Natural killer cell (primary cell): ENCODE measurements at regions of chr19 and their contacts with region 1.

Region 1: GRCh38 chr19:16435238-16435917 is 36.4 kb downstream of the EPS15L1 start:
- DNase-seq: peak; percentile 26 to 71
- ATAC-seq: peak; percentile 84 to 93 (median 91)
- H3K4me3 ChIP-seq: no peak overlapping the region
- H3K4me3 Mint-ChIP-seq: peak overlapping the region; percentile 82
- H3K27ac ChIP-seq: peak overlapping the region; percentile 72
- H3K27ac Mint-ChIP-seq: peak overlapping the region; percentile 97 to 99
- H3K4me1 ChIP-seq: peaks cover 57% of the 10 kb centered on the region
- H3K4me1 Mint-ChIP-seq: peaks cover 39 to 42% of the 10 kb centered on the region in 2 donors
- H3K27me3 ChIP-seq: no peaks in the 10 kb centered on the region
- H3K27me3 Mint-ChIP-seq: no peaks in the 10 kb centered on the region
- CTCF ChIP-seq: no peak

Region 2: DNA sequence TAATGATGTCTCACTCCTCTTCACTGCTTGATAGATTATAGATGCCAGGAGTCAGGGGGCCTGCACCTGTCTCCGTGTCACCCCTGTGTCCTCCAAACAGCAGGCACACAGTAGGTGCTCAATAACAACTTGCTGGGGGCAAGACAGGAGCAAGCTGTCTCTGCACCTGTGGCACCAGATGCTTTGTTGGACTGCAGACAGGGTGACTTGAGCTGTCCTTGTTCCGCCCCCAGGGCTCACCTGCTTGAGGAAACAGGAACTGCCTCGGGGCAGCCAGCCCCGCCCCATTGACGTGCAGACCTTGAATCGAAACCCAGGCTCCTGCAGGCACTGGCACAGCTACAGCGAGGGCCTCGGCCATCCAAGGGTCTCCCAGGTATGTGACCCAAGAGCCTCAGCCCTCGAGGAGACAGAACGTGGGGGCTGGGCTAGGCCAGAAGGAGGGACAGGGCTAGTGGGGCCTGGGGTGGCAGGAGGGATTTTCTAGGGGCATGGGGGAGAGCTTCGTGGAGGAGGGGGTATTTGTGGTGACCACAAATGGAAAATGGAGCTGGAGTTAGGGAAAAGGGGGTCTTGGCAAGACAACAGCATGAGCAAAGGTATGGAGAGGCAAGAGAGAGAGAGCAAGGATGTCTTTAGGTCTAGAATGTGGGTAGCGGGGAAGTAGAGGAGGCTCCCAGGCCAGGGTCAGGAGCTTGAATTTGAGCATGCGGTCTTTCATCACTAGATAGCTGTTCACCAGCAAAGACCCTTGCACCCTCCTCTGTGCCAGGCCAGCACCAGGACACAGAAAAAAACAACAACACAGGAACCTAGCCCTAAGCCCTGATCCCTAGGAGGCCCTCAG is 291.8 kb before region 1 on chr19 and contains the start of gene HSH2D:
- intact Hi-C with region 1: loop called (anchors 5 kb)
- DNase-seq: peak; percentile 73 to 89
- ATAC-seq: peak; percentile 68 to 84 (median 69)
- H3K4me3 ChIP-seq: peak within 1 kb of the TSS; percentile 71
- H3K4me3 Mint-ChIP-seq: peak within 1 kb of the TSS; percentile 99
- H3K27ac ChIP-seq: peak within 1 kb of the TSS; percentile 82
- H3K27ac Mint-ChIP-seq: peak within 1 kb of the TSS; percentile 99
- H3K4me1 ChIP-seq: peaks cover 99% of the 10 kb centered on the region
- H3K4me1 Mint-ChIP-seq: peaks cover 62 to 64% of the 10 kb centered on the region in 2 donors
- H3K27me3 ChIP-seq: no peaks in the 10 kb centered on the region
- H3K27me3 Mint-ChIP-seq: no peaks in the 10 kb centered on the region
- CTCF ChIP-seq: no peak
- total RNA-seq, gene HSH2D: 203 to 319 (median 278) TPM

Region 3: DNA sequence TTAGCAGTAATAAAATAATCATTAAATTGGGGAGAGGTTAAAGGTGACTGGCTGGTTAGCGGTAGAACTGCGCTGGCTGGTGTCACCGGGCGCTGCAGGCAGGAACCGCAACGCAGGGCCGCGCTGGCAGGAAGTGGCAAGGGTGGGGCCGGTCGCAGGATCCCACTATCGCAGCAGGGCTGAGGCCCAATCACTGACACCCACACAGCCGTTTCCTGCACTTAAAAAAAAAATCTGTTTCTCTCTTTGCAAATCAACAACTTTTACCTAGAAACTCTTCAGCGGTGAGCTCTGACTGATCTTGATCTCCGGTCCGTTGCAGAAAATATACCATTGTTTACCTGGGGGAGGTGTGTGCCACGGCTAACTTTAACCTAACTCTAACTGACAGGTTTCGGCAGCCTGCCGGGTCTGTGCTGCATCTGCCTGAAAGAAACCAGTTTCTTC is 63.8 kb before region 1 on chr19:
- intact Hi-C with region 1: loop called (anchors 1 kb)
- DNase-seq: peak; percentile 90 to 96
- ATAC-seq: peak; percentile 48 to 78 (median 73)
- H3K4me3 ChIP-seq: peak overlapping the region; percentile 13
- H3K4me3 Mint-ChIP-seq: no peak overlapping the region
- H3K27ac ChIP-seq: peak overlapping the region; percentile 94
- H3K27ac Mint-ChIP-seq: no peak overlapping the region
- H3K4me1 ChIP-seq: peaks cover 99% of the 10 kb centered on the region
- H3K4me1 Mint-ChIP-seq: peaks cover 33 to 34% of the 10 kb centered on the region in 2 donors
- H3K27me3 ChIP-seq: no peaks in the 10 kb centered on the region
- H3K27me3 Mint-ChIP-seq: no peaks in the 10 kb centered on the region
- CTCF ChIP-seq: no peak

Region 4: DNA sequence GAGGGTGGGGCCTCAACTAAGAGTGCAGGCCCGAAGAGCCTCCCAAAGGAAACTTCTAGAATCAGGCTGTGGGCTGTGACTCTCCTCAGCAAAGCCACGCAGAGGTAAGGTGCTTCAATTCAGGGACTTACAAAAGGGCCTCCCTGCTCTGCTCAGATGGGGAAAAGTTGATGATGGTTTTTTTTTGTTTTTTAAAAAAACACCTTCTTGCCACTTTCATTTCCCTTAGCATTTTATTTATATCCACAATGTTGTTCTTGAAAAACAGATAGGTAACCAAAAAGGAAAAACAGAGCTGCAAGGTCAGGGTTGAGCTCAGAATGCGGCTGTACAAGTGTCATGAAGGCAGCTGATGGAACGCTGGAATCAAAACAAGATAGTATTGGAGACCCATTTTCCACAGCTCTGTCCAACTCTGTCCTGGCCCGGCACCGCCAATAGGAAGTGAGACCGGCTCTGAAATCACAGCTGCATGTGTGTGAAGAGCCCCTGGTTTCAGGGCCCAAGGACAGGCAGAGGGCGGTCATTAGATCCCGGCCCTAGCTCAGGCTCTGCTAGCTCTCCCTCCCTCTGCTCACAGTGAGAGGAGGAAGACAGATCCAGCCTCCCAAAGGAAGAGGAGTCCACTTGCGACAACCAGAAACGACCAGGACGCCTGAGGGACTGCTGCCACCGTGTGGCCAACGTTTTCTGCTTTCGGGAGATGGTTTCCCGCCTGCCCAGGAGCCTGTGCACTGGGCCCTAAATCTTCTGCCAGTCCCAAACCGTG is 52.4 kb before region 1 on chr19:
- intact Hi-C with region 1: no loop called
- DNase-seq: peak; percentile 73 to 92
- ATAC-seq: peak; percentile 69 to 75 (median 73)
- H3K4me3 ChIP-seq: peak overlapping the region; percentile 8
- H3K4me3 Mint-ChIP-seq: peak overlapping the region; percentile 81
- H3K27ac ChIP-seq: peak overlapping the region; percentile 85
- H3K27ac Mint-ChIP-seq: peak overlapping the region; percentile 90 to 95
- H3K4me1 ChIP-seq: peaks cover 63% of the 10 kb centered on the region
- H3K4me1 Mint-ChIP-seq: peaks cover 39 to 60% of the 10 kb centered on the region in 2 donors
- H3K27me3 ChIP-seq: no peaks in the 10 kb centered on the region
- H3K27me3 Mint-ChIP-seq: no peaks in the 10 kb centered on the region
- CTCF ChIP-seq: peak; percentile 87

Region 5: GRCh38 chr19:16472992-16473391 is 37.6 kb after region 1 on chr19:
- intact Hi-C with region 1: loop called (anchors 1 kb)
- DNase-seq: no peak
- ATAC-seq: no peak
- H3K4me3 ChIP-seq: no peak overlapping the region
- H3K4me3 Mint-ChIP-seq: peak overlapping the region; percentile 81
- H3K27ac ChIP-seq: no peak overlapping the region
- H3K27ac Mint-ChIP-seq: no peak overlapping the region
- H3K4me1 ChIP-seq: peaks cover 29% of the 10 kb centered on the region
- H3K4me1 Mint-ChIP-seq: peaks cover 27 to 30% of the 10 kb centered on the region in 2 donors
- H3K27me3 ChIP-seq: no peaks in the 10 kb centered on the region
- H3K27me3 Mint-ChIP-seq: no peaks in the 10 kb centered on the region
- CTCF ChIP-seq: no peak

Region 6: DNA sequence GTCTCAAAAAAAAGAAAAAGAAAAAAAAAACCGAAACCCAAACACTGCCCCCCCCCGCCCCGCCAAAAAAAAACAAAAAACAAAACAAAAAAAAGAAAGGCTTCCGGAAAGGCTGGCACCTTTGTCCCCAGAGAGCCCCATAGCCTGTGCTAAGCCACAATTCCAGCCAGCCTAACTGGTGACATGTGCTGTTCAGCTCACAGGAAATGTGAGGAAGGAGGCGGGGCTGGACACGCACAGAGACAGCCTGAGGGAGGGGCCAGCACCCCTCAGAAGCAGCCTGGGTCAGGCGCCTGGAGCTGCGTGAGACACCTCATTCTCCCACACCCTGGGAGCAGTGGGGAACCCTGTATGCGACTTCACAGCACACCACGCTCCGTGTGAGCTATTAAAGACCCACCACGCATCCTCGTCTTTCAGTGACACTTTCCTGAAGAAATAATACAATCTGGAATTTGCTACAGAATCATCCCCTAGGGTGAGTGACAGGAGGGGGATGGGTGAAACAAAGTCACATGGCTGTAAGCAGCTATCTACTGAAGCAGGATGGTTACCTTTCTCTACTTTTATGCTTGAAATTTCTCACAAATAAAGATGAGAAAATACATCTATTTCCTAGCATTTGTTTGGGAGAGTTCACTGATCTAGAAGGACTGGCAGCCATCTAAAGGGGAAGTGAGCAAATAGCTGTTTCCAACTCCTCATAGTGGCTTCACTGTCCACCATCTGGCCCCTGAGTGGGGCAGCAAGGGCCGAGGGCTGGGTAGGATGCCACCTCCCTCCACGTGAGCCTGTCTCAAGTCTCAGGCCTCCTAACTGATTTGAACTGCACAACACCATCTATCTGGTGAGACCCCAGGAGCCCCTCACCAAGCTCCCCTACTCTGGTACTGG is 149.1 kb after region 1 on chr19:
- intact Hi-C with region 1: loop called (anchors 5 kb)
- DNase-seq: peak; percentile 91 to 98
- ATAC-seq: peak; percentile 80 to 93 (median 82)
- H3K4me3 ChIP-seq: peak overlapping the region; percentile 44
- H3K4me3 Mint-ChIP-seq: peak overlapping the region; percentile 74
- H3K27ac ChIP-seq: peak overlapping the region; percentile 88
- H3K27ac Mint-ChIP-seq: peak overlapping the region; percentile 88 to 89
- H3K4me1 ChIP-seq: peaks cover 81% of the 10 kb centered on the region
- H3K4me1 Mint-ChIP-seq: peaks cover 54 to 86% of the 10 kb centered on the region in 2 donors
- H3K27me3 ChIP-seq: no peaks in the 10 kb centered on the region
- H3K27me3 Mint-ChIP-seq: no peaks in the 10 kb centered on the region
- CTCF ChIP-seq: no peak